HCT116 (cell line): ENCODE measurements at regions of chr1 and their contacts with region 1.

Region 1: DNA sequence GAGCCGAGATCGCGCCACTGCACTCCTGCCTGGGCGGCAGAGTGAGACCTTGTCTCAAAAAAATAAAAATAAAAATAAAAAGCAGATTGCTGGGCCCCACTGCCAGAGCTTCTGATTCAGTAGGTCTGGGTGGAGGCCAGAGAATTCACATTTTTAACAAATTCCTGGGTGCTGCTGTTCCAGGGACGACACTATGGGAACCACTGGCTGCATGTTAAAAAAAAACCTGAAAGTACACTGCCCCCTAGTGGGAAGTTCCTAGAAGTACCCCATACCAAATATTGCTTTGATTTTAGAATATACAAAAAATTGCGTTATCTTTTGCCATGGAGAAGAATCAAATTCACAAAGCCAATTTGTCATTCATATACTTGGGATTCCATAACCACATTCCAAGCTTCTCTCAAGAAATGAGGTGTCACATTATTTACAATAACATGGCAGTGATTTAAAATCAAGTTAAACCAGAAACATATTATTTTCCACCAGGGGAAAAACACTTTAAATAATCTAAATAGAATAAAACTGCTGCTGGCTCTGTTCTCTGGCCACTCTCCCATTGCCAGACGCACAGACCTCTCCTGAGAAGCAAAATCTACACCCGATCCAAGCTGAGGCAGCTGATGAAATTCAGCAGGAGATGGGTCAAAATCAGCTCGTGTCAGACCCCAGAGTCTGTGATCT is 27.4 kb downstream of the SYF2 start:
- DNase-seq: peak; percentile 38
- ATAC-seq: peak; percentile 73; the same call in 1 of the 2 replicates
- H3K4me3 ChIP-seq: no peak overlapping the region
- H3K27ac ChIP-seq: no peak overlapping the region
- H3K4me1 ChIP-seq: no peaks in the 10 kb centered on the region
- H3K27me3 ChIP-seq: no peaks in the 10 kb centered on the region
- CTCF ChIP-seq: peak; percentile 60 to 80 (median 77)
- POLR2A ChIP-seq: no peak
- RAD21 ChIP-seq: peak; percentile 83

Region 2: GRCh38 chr1:24932284-24932683 is 272.7 kb before region 1 on chr1:
- CTCF ChIA-PET with region 1: no interaction called
- POLR2A ChIA-PET with region 1: no interaction called
- RAD21 ChIA-PET with region 1: no interaction called
- intact Hi-C with region 1: loop called (anchors 1 kb)
- DNase-seq: peak; percentile 21
- ATAC-seq: peak; percentile 68
- H3K4me3 ChIP-seq: peak overlapping the region in 1 of 2 experiments; percentile 30; a peak in 2 of 4 replicates
- H3K27ac ChIP-seq: no peak overlapping the region
- H3K4me1 ChIP-seq: peaks cover 4 to 26% of the 10 kb centered on the region in 2 experiments
- H3K27me3 ChIP-seq: no peaks in the 10 kb centered on the region
- CTCF ChIP-seq: peak; percentile 23 to 43 (median 33); a peak in 4 of 6 replicates
- POLR2A ChIP-seq: no peak
- RAD21 ChIP-seq: peak; percentile 61

Region 3: DNA sequence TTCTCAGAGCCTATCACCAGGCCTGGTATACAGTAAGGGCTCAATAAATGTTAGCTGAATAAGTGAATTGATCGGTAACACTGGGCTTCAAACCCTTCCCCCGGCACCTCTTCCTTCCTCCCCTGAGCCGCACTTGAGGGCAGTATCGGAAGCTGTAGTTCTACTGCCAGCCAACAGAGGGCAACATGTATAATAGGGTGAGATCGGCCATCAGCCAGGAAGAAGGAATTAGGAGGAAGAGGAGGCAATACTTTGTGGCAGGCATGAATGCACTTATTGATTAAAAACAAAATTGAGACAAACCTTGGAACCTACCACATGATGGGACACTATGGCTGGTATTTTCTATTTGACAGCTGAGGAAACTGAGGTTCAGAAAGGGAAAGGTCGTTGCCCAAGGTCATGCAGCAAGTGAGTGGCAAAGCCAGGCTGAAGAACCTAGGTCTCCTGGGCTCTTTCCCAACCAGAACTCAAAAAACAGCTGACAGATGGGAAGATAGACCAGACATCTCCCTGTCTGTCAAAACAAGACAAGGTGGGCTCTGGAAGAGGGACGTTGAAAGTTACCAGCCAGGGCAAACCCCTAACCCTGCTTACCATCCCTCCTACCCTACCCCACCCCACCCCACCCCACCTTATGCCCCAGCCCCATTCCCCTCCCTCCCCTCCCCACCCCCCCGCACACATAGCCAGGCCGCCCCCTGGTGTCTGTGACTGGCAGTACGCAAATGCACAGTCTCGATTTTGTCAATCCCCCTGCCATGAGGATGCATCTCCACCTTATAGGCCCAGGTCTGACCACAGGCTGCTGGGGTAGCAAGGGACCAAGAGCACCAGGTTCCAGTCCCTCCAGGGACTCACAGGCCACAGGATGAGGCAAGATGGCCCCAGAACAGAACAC is 167.5 kb before region 1 on chr1:
- CTCF ChIA-PET with region 1: interaction called, 5 read pairs
- POLR2A ChIA-PET with region 1: no interaction called
- RAD21 ChIA-PET with region 1: no interaction called
- intact Hi-C with region 1: loop called (anchors 2 kb)
- DNase-seq: peak; percentile 48
- ATAC-seq: peak; percentile 88
- H3K4me3 ChIP-seq: no peak overlapping the region
- H3K27ac ChIP-seq: no peak overlapping the region
- H3K4me1 ChIP-seq: peaks cover 0 to 8% of the 10 kb centered on the region in 2 experiments; a peak in 2 of 4 replicates
- H3K27me3 ChIP-seq: no peaks in the 10 kb centered on the region
- CTCF ChIP-seq: peak; percentile 77 to 89 (median 85)
- POLR2A ChIP-seq: no peak
- RAD21 ChIP-seq: peak; percentile 58

Region 4: DNA sequence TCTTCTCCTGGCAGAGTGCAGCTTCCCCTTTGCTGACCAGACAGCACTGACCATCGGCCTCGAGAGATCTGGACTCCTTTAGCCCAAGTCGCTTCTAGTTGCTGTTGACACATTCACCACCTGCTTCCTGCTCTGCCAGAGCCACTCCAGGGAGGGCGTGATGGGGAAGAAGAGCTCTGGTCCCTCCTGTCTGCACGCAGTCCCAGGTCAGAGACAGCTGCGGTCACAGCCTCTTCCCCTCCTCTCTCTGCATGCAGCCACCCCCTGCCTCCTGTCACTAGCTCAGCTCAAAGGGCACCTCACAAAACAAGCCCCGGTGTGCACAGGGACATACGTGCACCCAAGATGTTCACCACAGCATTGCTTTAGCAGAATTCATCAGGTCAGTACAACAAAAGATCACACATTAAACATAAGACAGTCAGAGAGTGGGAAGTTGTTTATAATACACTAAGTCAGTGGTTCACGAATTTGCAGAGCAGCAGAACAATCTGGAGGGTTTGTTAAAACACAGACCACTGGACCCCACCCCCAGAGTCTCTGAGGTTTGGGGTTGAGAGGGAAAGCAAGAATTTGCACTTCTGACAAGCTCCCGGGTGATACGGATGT is 105.5 kb before region 1 on chr1:
- CTCF ChIA-PET with region 1: no interaction called
- POLR2A ChIA-PET with region 1: no interaction called
- RAD21 ChIA-PET with region 1: no interaction called
- intact Hi-C with region 1: no loop called
- DNase-seq: no peak
- ATAC-seq: no peak
- H3K4me3 ChIP-seq: no peak overlapping the region
- H3K27ac ChIP-seq: no peak overlapping the region
- H3K4me1 ChIP-seq: no peaks in the 10 kb centered on the region; a peak in 1 of 4 replicates
- H3K27me3 ChIP-seq: no peaks in the 10 kb centered on the region
- CTCF ChIP-seq: no peak
- POLR2A ChIP-seq: no peak
- RAD21 ChIP-seq: no peak

Region 5: GRCh38 chr1:25117233-25117823 is 87.6 kb before region 1 on chr1:
- CTCF ChIA-PET with region 1: no interaction called
- POLR2A ChIA-PET with region 1: no interaction called
- RAD21 ChIA-PET with region 1: no interaction called
- intact Hi-C with region 1: loop called (anchors 5 kb)
- DNase-seq: peak; percentile 48
- ATAC-seq: peak; percentile 97
- H3K4me3 ChIP-seq: no peak overlapping the region
- H3K27ac ChIP-seq: no peak overlapping the region
- H3K4me1 ChIP-seq: peaks cover 0 to 4% of the 10 kb centered on the region in 2 experiments; a peak in 1 of 4 replicates
- H3K27me3 ChIP-seq: no peaks in the 10 kb centered on the region
- CTCF ChIP-seq: peak; percentile 36 to 64 (median 62); a peak in 5 of 6 replicates
- POLR2A ChIP-seq: no peak
- RAD21 ChIP-seq: peak; percentile 32; the same call in 1 of the 2 replicates